ENCODE measurements at regions of chr12 and their contacts with region 1.

Region 1: DNA sequence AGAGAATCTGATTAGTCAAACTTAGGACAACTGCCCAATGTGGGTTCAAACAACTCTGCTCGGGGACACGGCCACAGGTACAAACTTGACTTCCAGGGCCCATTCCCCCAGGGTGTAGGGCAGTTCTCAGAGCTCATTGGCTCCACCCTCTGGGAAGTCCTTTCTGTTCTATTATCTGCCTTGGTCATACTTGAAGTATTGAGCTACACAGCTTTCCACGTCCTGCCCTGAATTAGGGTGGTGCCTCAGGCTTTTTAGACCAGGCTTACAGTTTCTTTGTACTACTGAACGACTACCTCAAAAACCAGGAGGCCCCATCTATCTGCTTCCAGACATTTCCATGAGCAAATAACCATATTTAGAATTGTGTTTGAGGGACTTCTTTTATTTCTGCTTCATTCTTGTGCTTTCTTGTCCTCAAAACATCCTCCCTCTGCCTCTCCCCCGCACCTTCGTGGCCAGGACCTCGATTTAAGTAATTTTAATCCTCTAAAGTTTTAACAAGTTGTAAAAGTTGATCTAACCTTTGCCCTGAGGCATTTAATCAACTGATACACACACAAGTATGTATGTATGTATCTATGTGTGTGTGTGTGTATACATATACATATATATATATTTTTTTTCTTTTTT is 281.7 kb upstream of the AMIGO2 start:
- DNase-seq: peak; percentile 46
- H3K4me3 Mint-ChIP-seq: peak overlapping the region; percentile 67
- H3K27ac Mint-ChIP-seq: peak overlapping the region; percentile 95
- H3K4me1 Mint-ChIP-seq: peaks cover 51% of the 10 kb centered on the region
- H3K27me3 Mint-ChIP-seq: no peaks in the 10 kb centered on the region

Region 2: GRCh38 chr12:47264951-47265350 is 96.6 kb before region 1 on chr12:
- intact Hi-C with region 1: no loop called
- DNase-seq: no peak
- H3K4me3 Mint-ChIP-seq: no peak overlapping the region
- H3K27ac Mint-ChIP-seq: no peak overlapping the region
- H3K4me1 Mint-ChIP-seq: peaks cover 33% of the 10 kb centered on the region
- H3K27me3 Mint-ChIP-seq: no peaks in the 10 kb centered on the region

Region 3: GRCh38 chr12:47276621-47277309 is 84.7 kb before region 1 on chr12:
- intact Hi-C with region 1: loop called (anchors 2 kb)
- DNase-seq: peak; percentile 65
- H3K4me3 Mint-ChIP-seq: peak overlapping the region; percentile 48
- H3K27ac Mint-ChIP-seq: peak overlapping the region; percentile 81
- H3K4me1 Mint-ChIP-seq: peaks cover 74% of the 10 kb centered on the region
- H3K27me3 Mint-ChIP-seq: no peaks in the 10 kb centered on the region

Region 4: DNA sequence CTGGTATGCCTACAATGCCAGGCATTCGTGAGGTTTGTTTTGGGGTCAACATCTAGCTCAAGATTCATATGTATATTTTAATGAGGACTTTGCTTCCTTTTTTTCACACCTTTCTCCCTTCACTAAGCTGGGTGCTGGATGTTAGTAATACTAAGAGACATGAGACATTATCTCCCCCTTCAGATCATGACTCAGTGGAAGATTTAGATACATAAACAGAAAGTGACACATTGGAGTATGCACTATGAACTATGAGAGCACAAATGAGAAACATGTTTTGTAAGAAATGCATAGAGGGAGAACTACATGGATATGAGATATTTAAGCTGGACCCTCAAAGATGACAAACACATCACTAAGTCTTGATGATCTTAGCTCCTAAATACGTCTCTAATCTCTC is 58.0 kb after region 1 on chr12:
- intact Hi-C with region 1: loop called (anchors 1 kb)
- DNase-seq: no peak
- H3K4me3 Mint-ChIP-seq: no peak overlapping the region
- H3K27ac Mint-ChIP-seq: peak overlapping the region; percentile 7
- H3K4me1 Mint-ChIP-seq: peaks cover 17% of the 10 kb centered on the region
- H3K27me3 Mint-ChIP-seq: no peaks in the 10 kb centered on the region

Region 5: GRCh38 chr12:47576289-47576945 is 214.9 kb after region 1 on chr12:
- intact Hi-C with region 1: loop called (anchors 10 kb)
- DNase-seq: no peak
- H3K4me3 Mint-ChIP-seq: no peak overlapping the region
- H3K27ac Mint-ChIP-seq: no peak overlapping the region
- H3K4me1 Mint-ChIP-seq: peaks cover 25% of the 10 kb centered on the region
- H3K27me3 Mint-ChIP-seq: no peaks in the 10 kb centered on the region